CD4-positive, alpha-beta memory T cell (primary cell): ENCODE measurements at regions of chr14 and their contacts with region 1.

Region 1: DNA sequence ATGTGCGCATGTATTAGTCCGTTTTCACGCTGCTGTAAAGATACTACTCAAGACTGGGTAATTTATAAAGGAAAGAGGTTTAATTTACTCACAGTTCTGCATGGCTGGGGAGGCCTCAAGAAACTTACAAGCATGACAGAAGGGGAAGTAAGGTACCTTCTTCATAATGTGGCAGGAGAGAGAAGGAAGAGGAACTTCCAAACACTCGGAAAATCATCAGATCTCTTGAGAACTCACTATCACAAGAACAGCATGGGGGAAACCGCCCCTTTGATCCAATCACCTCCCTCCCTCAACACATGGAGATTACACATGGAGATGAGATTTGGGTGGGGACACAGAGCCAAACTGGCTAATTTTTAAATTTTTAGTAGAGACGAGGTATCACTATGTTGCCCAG is 41.8 kb upstream of the SNX6 start:
- DNase-seq: no peak
- H3K4me3 ChIP-seq: no peak overlapping the region
- H3K4me3 Mint-ChIP-seq: no peak overlapping the region
- H3K27ac ChIP-seq: no peak overlapping the region
- H3K27ac Mint-ChIP-seq: no peak overlapping the region
- H3K4me1 ChIP-seq: peaks cover 3% of the 10 kb centered on the region
- H3K4me1 Mint-ChIP-seq: peaks cover 0 to 3% (median 0%) of the 10 kb centered on the region in 4 donors
- H3K27me3 ChIP-seq: no peaks in the 10 kb centered on the region
- H3K27me3 Mint-ChIP-seq: no peaks in the 10 kb centered on the region

Region 2: DNA sequence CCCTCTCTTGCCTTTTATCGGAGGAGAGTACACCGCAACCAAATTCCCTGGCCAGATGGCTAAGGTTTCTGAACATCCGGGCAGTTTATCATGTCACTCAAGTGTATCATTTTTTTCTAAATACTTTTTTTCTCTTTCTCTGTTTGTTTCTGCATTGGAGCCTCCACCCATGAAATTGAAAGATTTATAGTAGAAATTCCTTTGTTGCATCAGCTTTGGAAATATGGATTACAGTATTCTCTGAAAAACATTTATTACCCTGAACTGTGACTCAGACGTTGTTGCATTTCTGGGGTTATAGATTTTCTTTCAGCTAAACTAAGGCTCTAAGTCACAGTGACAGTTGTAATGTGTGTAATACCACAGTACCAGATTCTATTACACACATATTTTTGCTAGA is 396.6 kb before region 1 on chr14:
- CTCF ChIA-PET with region 1: no interaction called
- POLR2A ChIA-PET with region 1: no interaction called
- intact Hi-C with region 1: no loop called
- DNase-seq: no peak
- H3K4me3 ChIP-seq: no peak overlapping the region
- H3K4me3 Mint-ChIP-seq: no peak overlapping the region
- H3K27ac ChIP-seq: no peak overlapping the region
- H3K27ac Mint-ChIP-seq: no peak overlapping the region
- H3K4me1 ChIP-seq: no peaks in the 10 kb centered on the region
- H3K4me1 Mint-ChIP-seq: no peaks in the 10 kb centered on the region
- H3K27me3 ChIP-seq: no peaks in the 10 kb centered on the region
- H3K27me3 Mint-ChIP-seq: peaks cover 9 to 11% of the 10 kb centered on the region in 2 donors

Region 3: GRCh38 chr14:34472706-34473279 is 198.9 kb before region 1 on chr14:
- CTCF ChIA-PET with region 1: no interaction called
- POLR2A ChIA-PET with region 1: no interaction called
- intact Hi-C with region 1: no loop called
- DNase-seq: no peak
- H3K4me3 ChIP-seq: no peak overlapping the region
- H3K4me3 Mint-ChIP-seq: no peak overlapping the region
- H3K27ac ChIP-seq: no peak overlapping the region
- H3K27ac Mint-ChIP-seq: no peak overlapping the region
- H3K4me1 ChIP-seq: no peaks in the 10 kb centered on the region
- H3K4me1 Mint-ChIP-seq: no peaks in the 10 kb centered on the region
- H3K27me3 ChIP-seq: no peaks in the 10 kb centered on the region
- H3K27me3 Mint-ChIP-seq: no peaks in the 10 kb centered on the region

Region 4: GRCh38 chr14:34693228-34693939 is 21.7 kb after region 1 on chr14:
- CTCF ChIA-PET with region 1: interaction called, 17 read pairs
- POLR2A ChIA-PET with region 1: no interaction called
- intact Hi-C with region 1: no loop called
- DNase-seq: peak in 2 of 5 donors; percentile 9 to 18
- H3K4me3 ChIP-seq: no peak overlapping the region
- H3K4me3 Mint-ChIP-seq: peak overlapping the region in 5 of 8 donors; percentile 37 to 81 (median 52)
- H3K27ac ChIP-seq: no peak overlapping the region
- H3K27ac Mint-ChIP-seq: peak overlapping the region in 4 of 7 donors; percentile 2 to 66 (median 44)
- H3K4me1 ChIP-seq: peaks cover 7% of the 10 kb centered on the region
- H3K4me1 Mint-ChIP-seq: peaks cover 6 to 15% (median 8%) of the 10 kb centered on the region in 4 donors
- H3K27me3 ChIP-seq: no peaks in the 10 kb centered on the region
- H3K27me3 Mint-ChIP-seq: no peaks in the 10 kb centered on the region

Region 5: GRCh38 chr14:34699873-34700621 is 28.3 kb after region 1 on chr14:
- CTCF ChIA-PET with region 1: interaction called, 14 read pairs
- POLR2A ChIA-PET with region 1: no interaction called
- intact Hi-C with region 1: no loop called
- DNase-seq: no peak
- H3K4me3 ChIP-seq: no peak overlapping the region
- H3K4me3 Mint-ChIP-seq: no peak overlapping the region
- H3K27ac ChIP-seq: no peak overlapping the region
- H3K27ac Mint-ChIP-seq: no peak overlapping the region
- H3K4me1 ChIP-seq: no peaks in the 10 kb centered on the region
- H3K4me1 Mint-ChIP-seq: peaks cover 0 to 4% (median 0%) of the 10 kb centered on the region in 4 donors
- H3K27me3 ChIP-seq: no peaks in the 10 kb centered on the region
- H3K27me3 Mint-ChIP-seq: no peaks in the 10 kb centered on the region